Spleen (tissue), 13 donors: ENCODE measurements at regions of chr14 and their contacts with region 1.

Region 1: DNA sequence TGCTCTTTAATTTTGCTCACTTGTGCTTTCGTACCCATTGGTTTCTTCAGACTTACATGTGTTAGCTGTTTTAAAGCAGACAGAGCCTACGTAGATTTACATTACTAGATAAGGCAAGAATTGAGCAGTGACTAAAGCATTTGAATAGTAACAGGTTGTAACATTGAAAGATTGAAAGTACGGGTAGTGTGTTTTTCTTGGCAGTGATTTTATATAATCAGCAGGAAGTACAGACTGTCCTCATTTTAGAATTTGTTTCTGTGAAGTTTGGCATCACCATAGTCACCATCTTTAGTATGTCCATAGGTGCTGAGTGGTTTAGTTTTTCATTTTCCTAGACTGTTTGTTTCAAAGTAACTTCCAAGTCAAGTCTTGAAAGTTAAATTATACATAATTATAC is 14.0 kb downstream of the RTRAF start:
- DNase-seq: no peak
- H3K4me3 ChIP-seq: no peak overlapping the region
- H3K27ac ChIP-seq: no peak overlapping the region
- H3K4me1 ChIP-seq: no peaks in the 10 kb centered on the region
- H3K27me3 ChIP-seq: no peaks in the 10 kb centered on the region
- CTCF ChIP-seq: no peak
- POLR2A ChIP-seq: no peak

Region 2: DNA sequence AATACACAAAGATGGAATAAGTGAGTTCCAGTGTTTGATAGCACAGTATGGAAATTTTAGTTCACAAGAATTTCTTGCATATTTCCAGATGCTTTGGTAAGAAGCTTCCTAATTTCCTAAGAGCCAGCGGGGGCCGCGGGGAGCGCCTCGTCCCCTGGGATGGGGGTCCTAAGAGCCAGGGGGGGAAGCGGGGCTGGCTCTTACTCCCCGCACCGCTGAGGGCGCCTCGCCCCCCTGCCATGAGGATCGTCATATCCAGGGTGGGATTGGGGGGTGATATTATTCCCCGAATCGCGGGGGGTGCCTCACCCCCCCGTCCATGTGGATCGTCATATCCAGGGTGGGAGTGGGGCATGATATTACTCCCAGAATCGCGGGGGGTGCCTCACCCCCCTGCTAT is 243.4 kb before region 1 on chr14:
- intact Hi-C with region 1: no loop called
- DNase-seq: no peak
- H3K4me3 ChIP-seq: no peak overlapping the region
- H3K27ac ChIP-seq: no peak overlapping the region
- H3K4me1 ChIP-seq: no peaks in the 10 kb centered on the region
- H3K27me3 ChIP-seq: peaks cover 0 to 11% (median 0%) of the 10 kb centered on the region in 7 donors
- CTCF ChIP-seq: no peak
- POLR2A ChIP-seq: no peak

Region 3: GRCh38 chr14:52124791-52125661 is 121.7 kb after region 1 on chr14:
- intact Hi-C with region 1: loop called (anchors 10 kb)
- DNase-seq: no peak
- H3K4me3 ChIP-seq: no peak overlapping the region
- H3K27ac ChIP-seq: no peak overlapping the region
- H3K4me1 ChIP-seq: peaks cover 0 to 17% (median 0%) of the 10 kb centered on the region in 6 donors
- H3K27me3 ChIP-seq: no peaks in the 10 kb centered on the region
- CTCF ChIP-seq: no peak
- POLR2A ChIP-seq: no peak

Region 4: DNA sequence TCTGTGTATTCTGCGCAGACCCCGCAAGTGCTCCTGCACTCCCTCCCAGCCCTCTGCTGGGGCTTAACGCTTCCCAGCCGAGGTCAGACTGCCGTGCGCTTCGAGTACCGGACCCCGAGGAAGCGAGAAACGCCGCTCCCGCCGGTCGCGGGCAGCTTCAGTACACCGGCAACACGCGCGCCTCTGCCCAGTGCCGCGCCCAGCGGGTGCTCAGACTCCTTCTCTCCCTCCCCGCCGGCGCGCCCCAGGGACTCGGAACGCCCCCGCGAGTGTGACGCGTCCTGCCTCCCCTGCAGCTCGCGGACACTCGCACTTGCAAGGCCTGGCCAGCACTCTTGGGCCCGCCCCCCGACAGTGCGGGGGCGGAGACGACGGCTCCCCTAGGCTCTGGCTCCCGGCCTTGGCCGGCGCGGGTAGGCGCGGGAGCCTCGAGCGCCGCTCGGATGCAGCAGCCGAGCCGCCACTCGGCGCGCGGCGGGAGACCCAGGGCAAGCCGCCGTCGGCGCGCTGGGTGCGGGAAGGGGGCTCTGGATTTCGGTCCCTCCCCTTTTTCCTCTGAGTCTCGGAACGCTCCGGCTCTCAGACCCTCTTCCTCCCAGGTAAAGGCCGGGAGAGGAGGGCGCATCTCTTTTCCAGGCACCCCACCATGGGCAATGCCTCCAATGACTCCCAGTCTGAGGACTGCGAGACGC is 310.7 kb after region 1 on chr14 and contains the start of gene PTGER2:
- intact Hi-C with region 1: no loop called
- DNase-seq: peak; percentile 97
- H3K4me3 ChIP-seq: peak within 1 kb of the TSS; percentile 61 to 82 (median 64)
- H3K27ac ChIP-seq: peak within 1 kb of the TSS; percentile 68 to 92 (median 88)
- H3K4me1 ChIP-seq: peaks cover 20 to 99% (median 66%) of the 10 kb centered on the region in 6 donors
- H3K27me3 ChIP-seq: peaks cover 0 to 59% (median 24%) of the 10 kb centered on the region in 7 donors
- CTCF ChIP-seq: no peak
- POLR2A ChIP-seq: peak in 2 of 3 donors; percentile 8 to 65
- total RNA-seq, gene PTGER2: 13.2 to 44.7 (median 16.2) TPM

Region 5: DNA sequence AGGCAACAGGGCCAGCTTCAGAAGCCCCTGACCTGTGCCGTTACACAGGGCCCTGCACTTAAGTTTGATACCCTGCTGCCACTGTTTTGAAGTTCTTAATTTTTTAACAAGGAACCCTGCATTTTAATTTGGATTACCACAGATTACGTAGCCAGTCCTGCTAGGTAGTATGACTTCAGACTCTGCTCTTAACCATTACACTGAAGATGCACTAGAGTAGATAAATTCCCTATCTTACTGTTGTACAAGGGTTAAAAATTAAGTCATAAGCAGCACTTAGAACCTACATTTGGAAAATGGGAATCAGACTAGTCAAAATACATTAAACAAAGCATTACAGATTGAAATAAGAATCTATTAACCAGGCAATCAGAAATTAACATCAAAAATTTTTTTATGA is 785.8 kb after region 1 on chr14:
- intact Hi-C with region 1: no loop called
- DNase-seq: no peak
- H3K4me3 ChIP-seq: no peak overlapping the region
- H3K27ac ChIP-seq: no peak overlapping the region
- H3K4me1 ChIP-seq: peaks cover 8 to 41% (median 25%) of the 10 kb centered on the region in 6 donors
- H3K27me3 ChIP-seq: no peaks in the 10 kb centered on the region
- CTCF ChIP-seq: no peak
- POLR2A ChIP-seq: no peak